ENCODE measurements at regions of chr14 and their contacts with region 1.

Region 1: GRCh38 chr14:59067127-59067894 is 121.2 kb upstream of the DAAM1 start:
- DNase-seq: no peak
- H3K4me3 ChIP-seq: no peak overlapping the region
- H3K27ac ChIP-seq: no peak overlapping the region
- H3K4me1 ChIP-seq: no peaks in the 10 kb centered on the region
- H3K27me3 ChIP-seq: no peaks in the 10 kb centered on the region
- CTCF ChIP-seq: no peak
- EP300 ChIP-seq: no peak
- POLR2A ChIP-seq: no peak

Region 2: GRCh38 chr14:58491593-58491992 is 575.7 kb before region 1 on chr14:
- intact Hi-C with region 1: loop called in 1 of 4 experiments (anchors 10 kb)
- DNase-seq: no peak
- H3K4me3 ChIP-seq: no peak overlapping the region
- H3K27ac ChIP-seq: no peak overlapping the region
- H3K4me1 ChIP-seq: no peaks in the 10 kb centered on the region
- H3K27me3 ChIP-seq: no peaks in the 10 kb centered on the region
- CTCF ChIP-seq: no peak
- EP300 ChIP-seq: no peak
- POLR2A ChIP-seq: no peak

Region 3: GRCh38 chr14:59175404-59175803 is 108.1 kb after region 1 on chr14:
- intact Hi-C with region 1: no loop called
- DNase-seq: no peak
- H3K4me3 ChIP-seq: no peak overlapping the region
- H3K27ac ChIP-seq: no peak overlapping the region
- H3K4me1 ChIP-seq: no peaks in the 10 kb centered on the region
- H3K27me3 ChIP-seq: no peaks in the 10 kb centered on the region
- CTCF ChIP-seq: no peak
- EP300 ChIP-seq: no peak
- POLR2A ChIP-seq: no peak